T-cell (primary cell): ENCODE measurements at regions of chr20 and their contacts with region 1.

Region 1: GRCh38 chr20:17917832-17918618 is 50.6 kb downstream of the SNX5 start:
- DNase-seq: no peak
- ATAC-seq: no peak
- H3K4me3 ChIP-seq: no peak overlapping the region
- H3K4me3 Mint-ChIP-seq: no peak overlapping the region
- H3K27ac ChIP-seq: no peak overlapping the region
- H3K27ac Mint-ChIP-seq: no peak overlapping the region
- H3K4me1 ChIP-seq: no peaks in the 10 kb centered on the region
- H3K4me1 Mint-ChIP-seq: no peaks in the 10 kb centered on the region
- H3K27me3 ChIP-seq: peaks cover 0 to 10% of the 10 kb centered on the region in 2 experiments
- H3K27me3 Mint-ChIP-seq: peaks cover 5 to 12% of the 10 kb centered on the region in 2 donors

Region 2: GRCh38 chr20:17867131-17867925 is 50.7 kb before region 1 on chr20:
- CTCF ChIA-PET with region 1: interaction called in 1 of 2 experiments, 12 read pairs
- POLR2A ChIA-PET with region 1: no interaction called
- DNase-seq: no peak
- ATAC-seq: no peak
- H3K4me3 ChIP-seq: no peak overlapping the region
- H3K4me3 Mint-ChIP-seq: no peak overlapping the region
- H3K27ac ChIP-seq: no peak overlapping the region
- H3K27ac Mint-ChIP-seq: no peak overlapping the region
- H3K4me1 ChIP-seq: peaks cover 0 to 2% of the 10 kb centered on the region in 2 experiments
- H3K4me1 Mint-ChIP-seq: peaks cover 9 to 10% (median 9%) of the 10 kb centered on the region in 3 donors
- H3K27me3 ChIP-seq: peaks cover 0 to 33% of the 10 kb centered on the region in 2 experiments
- H3K27me3 Mint-ChIP-seq: peaks cover under 1 to 17% of the 10 kb centered on the region in 2 donors

Region 3: DNA sequence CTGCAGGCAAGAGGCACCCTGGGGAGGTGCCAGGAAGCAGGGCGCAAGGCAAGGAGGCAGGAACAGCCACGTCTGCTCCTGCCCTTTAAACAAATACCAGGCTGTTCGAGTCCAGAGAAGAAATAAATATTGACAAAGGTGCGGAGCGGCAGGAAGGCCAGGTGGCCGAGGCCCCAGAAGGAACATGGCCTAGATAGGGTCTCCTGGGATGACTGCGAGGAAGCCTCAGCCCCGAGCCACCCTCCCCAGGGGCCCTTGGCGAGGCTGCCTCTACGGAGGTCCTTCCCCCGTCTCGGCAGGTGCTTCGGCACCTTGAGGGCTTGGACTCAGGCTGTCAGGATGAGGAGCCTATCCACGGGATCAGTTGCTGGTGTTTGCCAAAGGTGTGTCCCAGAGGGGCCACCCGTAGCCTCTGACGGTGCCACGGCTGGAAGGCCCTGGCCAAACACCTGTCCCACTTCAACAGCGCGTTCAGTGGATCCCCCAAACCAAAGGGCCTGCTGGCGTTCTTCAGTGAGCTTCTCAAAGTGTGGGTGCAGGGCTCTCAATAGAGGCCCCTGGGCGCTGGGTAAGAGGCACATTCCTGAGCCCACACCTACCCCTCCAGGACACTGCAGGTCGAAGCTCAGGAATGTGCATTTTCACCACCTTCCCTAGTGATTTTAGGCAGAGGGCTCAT is 10.7 kb after region 1 on chr20:
- CTCF ChIA-PET with region 1: no interaction called
- POLR2A ChIA-PET with region 1: no interaction called
- DNase-seq: no peak
- ATAC-seq: no peak
- H3K4me3 ChIP-seq: no peak overlapping the region
- H3K4me3 Mint-ChIP-seq: no peak overlapping the region
- H3K27ac ChIP-seq: no peak overlapping the region
- H3K27ac Mint-ChIP-seq: no peak overlapping the region
- H3K4me1 ChIP-seq: no peaks in the 10 kb centered on the region
- H3K4me1 Mint-ChIP-seq: no peaks in the 10 kb centered on the region
- H3K27me3 ChIP-seq: peaks cover 0 to 27% of the 10 kb centered on the region in 2 experiments
- H3K27me3 Mint-ChIP-seq: peaks cover 6 to 9% of the 10 kb centered on the region in 2 donors